Activated B cell treated with CpG ODN at 0.5 μM for 24 hours (primary cell): ENCODE measurements at regions of chr13 and their contacts with region 1.

Region 1: DNA sequence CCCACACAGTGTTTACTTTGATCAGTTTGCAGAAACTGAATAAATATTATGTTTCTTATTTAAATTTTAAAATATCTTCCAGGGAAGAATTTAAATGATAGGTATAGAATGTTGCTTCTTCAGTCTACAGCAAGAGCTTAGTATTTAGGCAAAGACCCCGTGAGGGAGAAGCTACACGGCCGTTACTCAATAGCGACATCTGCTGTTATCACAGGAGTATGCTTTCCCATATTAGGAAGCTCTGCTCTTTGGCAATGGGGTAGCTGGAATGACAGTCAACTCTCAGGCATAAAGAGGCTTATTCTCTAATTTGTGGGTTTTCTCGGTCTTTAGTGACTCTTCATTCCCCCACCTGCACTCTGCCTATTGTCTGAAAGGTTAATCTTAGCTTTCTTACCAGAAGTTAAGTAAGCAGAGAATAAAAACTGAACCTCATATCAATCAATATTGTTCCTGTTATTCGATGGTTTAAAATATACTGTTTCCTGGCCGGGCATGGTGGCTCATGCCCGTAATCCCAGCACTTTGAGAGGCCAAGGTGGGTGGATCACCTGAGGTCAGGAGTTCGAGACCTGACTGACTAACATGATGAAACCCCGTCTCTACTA is 13.2 kb upstream of the LHFPL6 start:
- DNase-seq: no peak
- ATAC-seq: peak; percentile 62
- H3K4me3 Mint-ChIP-seq: no peak overlapping the region
- H3K27ac Mint-ChIP-seq: no peak overlapping the region
- H3K4me1 Mint-ChIP-seq: no peaks in the 10 kb centered on the region
- H3K27me3 Mint-ChIP-seq: peaks cover 17% of the 10 kb centered on the region
- CTCF ChIP-seq: peak; percentile 84

Region 2: GRCh38 chr13:39051157-39051556 is 565.0 kb before region 1 on chr13:
- CTCF ChIA-PET with region 1: interaction called, 13 read pairs
- POLR2A ChIA-PET with region 1: no interaction called
- intact Hi-C with region 1: loop called (anchors 1 kb)
- DNase-seq: no peak
- ATAC-seq: no peak
- H3K4me3 Mint-ChIP-seq: no peak overlapping the region
- H3K27ac Mint-ChIP-seq: no peak overlapping the region
- H3K4me1 Mint-ChIP-seq: peaks cover 2% of the 10 kb centered on the region
- H3K27me3 Mint-ChIP-seq: no peaks in the 10 kb centered on the region
- CTCF ChIP-seq: no peak

Region 3: DNA sequence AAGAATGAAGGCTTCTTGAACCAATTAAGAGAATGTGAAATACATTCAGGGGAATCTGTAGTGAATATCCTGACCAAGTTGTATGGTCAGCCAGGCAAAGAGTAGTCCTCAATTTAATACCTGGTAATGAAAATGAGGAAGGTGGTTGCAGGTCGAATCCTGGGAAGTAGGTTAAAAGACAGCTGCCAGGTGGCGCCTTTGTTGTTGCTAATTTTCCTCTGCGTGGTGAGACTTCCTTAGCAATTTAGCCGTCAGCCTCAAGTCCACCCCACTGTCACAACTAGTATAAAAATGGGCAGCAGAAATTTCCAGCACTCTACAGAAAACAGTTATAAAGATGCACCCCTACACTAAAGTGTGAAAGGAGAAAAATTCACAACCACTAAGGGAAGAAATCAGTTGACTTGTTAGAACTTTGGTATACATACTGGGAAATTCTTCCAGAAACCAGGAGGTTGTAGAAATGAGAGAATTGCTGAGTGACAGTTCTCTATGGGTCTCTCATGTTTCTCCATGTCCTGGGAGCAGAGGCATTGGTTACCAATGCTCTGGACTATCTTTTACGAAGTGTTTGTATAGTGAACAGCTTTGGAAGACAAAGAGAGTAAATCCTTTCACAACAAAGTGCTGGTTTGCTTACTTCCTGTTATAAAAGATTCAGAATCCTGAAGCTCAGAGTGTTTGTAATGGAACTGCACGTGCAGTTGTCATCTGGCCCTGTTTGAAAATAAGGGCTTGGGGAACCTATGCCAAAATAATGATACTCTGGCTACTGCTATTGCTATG is 342.0 kb before region 1 on chr13:
- CTCF ChIA-PET with region 1: interaction called, 3 read pairs
- POLR2A ChIA-PET with region 1: no interaction called
- intact Hi-C with region 1: loop called (anchors 2 kb)
- DNase-seq: no peak
- ATAC-seq: no peak
- H3K4me3 Mint-ChIP-seq: no peak overlapping the region
- H3K27ac Mint-ChIP-seq: no peak overlapping the region
- H3K4me1 Mint-ChIP-seq: no peaks in the 10 kb centered on the region
- H3K27me3 Mint-ChIP-seq: peaks cover 2% of the 10 kb centered on the region
- CTCF ChIP-seq: no peak

Region 4: GRCh38 chr13:39676315-39676876 is 60.2 kb after region 1 on chr13:
- CTCF ChIA-PET with region 1: interaction called, 3 read pairs
- POLR2A ChIA-PET with region 1: no interaction called
- intact Hi-C with region 1: loop called (anchors 1 kb)
- DNase-seq: no peak
- ATAC-seq: no peak
- H3K4me3 Mint-ChIP-seq: no peak overlapping the region
- H3K27ac Mint-ChIP-seq: no peak overlapping the region
- H3K4me1 Mint-ChIP-seq: no peaks in the 10 kb centered on the region
- H3K27me3 Mint-ChIP-seq: no peaks in the 10 kb centered on the region
- CTCF ChIP-seq: no peak

Region 5: GRCh38 chr13:39982745-39983144 is 366.6 kb after region 1 on chr13:
- CTCF ChIA-PET with region 1: no interaction called
- POLR2A ChIA-PET with region 1: no interaction called
- intact Hi-C with region 1: no loop called
- DNase-seq: no peak
- ATAC-seq: no peak
- H3K4me3 Mint-ChIP-seq: no peak overlapping the region
- H3K27ac Mint-ChIP-seq: no peak overlapping the region
- H3K4me1 Mint-ChIP-seq: no peaks in the 10 kb centered on the region
- H3K27me3 Mint-ChIP-seq: peaks cover 12% of the 10 kb centered on the region
- CTCF ChIP-seq: no peak